HepG2 (cell line): ENCODE measurements at regions of chr10 and their contacts with region 1.

Region 1: GRCh38 chr10:112741830-112742411 is 208.1 kb upstream of the TCF7L2 start:
- DNase-seq: peak; percentile 76
- ATAC-seq: no peak
- H3K4me3 ChIP-seq: no peak overlapping the region
- H3K27ac ChIP-seq: peak overlapping the region; percentile 92
- H3K4me1 ChIP-seq: peaks cover 86% of the 10 kb centered on the region
- H3K27me3 ChIP-seq: no peaks in the 10 kb centered on the region
- CTCF ChIP-seq: no peak
- EP300 ChIP-seq: peak in 1 of 2 experiments; percentile 87; a peak in 2 of 4 replicates
- POLR2A ChIP-seq: no peak
- RAD21 ChIP-seq: no peak

Region 2: GRCh38 chr10:112728118-112728883 is 13.6 kb before region 1 on chr10:
- CTCF ChIA-PET with region 1: no interaction called
- POLR2A ChIA-PET with region 1: interaction called, 31 read pairs
- in situ Hi-C with region 1: no loop called
- intact Hi-C with region 1: loop called (anchors 1 kb)
- DNase-seq: peak; percentile 92
- ATAC-seq: peak; percentile 98
- H3K4me3 ChIP-seq: peak overlapping the region in 1 of 3 experiments; percentile 27; a peak in 1 of 6 replicates
- H3K27ac ChIP-seq: peak overlapping the region; percentile 86
- H3K4me1 ChIP-seq: peaks cover 86% of the 10 kb centered on the region
- H3K27me3 ChIP-seq: no peaks in the 10 kb centered on the region
- CTCF ChIP-seq: 0 out of 2 replicates have a peak, but pooled peaks have one; percentile 8
- EP300 ChIP-seq: peak in 1 of 2 experiments; percentile 94; a peak in 2 of 4 replicates
- POLR2A ChIP-seq: 0 out of 4 replicates have a peak, but pooled peaks of 1 of the 2 experiments have one; percentile 18
- RAD21 ChIP-seq: 0 out of 2 replicates have a peak, but pooled peaks have one; percentile 24